ENCODE measurements at regions of chr11 and their contacts with region 1.

Region 1: GRCh38 chr11:46537537-46538295 is 56.1 kb downstream of the AMBRA1 start:
- DNase-seq: peak in 1 of 2 donors; percentile 56
- ATAC-seq: no peak
- H3K4me3 ChIP-seq: no peak overlapping the region
- H3K27ac ChIP-seq: no peak overlapping the region
- H3K4me1 ChIP-seq: no peaks in the 10 kb centered on the region
- H3K27me3 ChIP-seq: no peaks in the 10 kb centered on the region

Region 2: GRCh38 chr11:46149342-46149741 is 388.4 kb before region 1 on chr11:
- intact Hi-C with region 1: loop called in 1 of 2 experiments (anchors 5 kb)
- DNase-seq: no peak
- ATAC-seq: no peak
- H3K4me3 ChIP-seq: no peak overlapping the region
- H3K27ac ChIP-seq: no peak overlapping the region
- H3K4me1 ChIP-seq: no peaks in the 10 kb centered on the region
- H3K27me3 ChIP-seq: no peaks in the 10 kb centered on the region

Region 3: DNA sequence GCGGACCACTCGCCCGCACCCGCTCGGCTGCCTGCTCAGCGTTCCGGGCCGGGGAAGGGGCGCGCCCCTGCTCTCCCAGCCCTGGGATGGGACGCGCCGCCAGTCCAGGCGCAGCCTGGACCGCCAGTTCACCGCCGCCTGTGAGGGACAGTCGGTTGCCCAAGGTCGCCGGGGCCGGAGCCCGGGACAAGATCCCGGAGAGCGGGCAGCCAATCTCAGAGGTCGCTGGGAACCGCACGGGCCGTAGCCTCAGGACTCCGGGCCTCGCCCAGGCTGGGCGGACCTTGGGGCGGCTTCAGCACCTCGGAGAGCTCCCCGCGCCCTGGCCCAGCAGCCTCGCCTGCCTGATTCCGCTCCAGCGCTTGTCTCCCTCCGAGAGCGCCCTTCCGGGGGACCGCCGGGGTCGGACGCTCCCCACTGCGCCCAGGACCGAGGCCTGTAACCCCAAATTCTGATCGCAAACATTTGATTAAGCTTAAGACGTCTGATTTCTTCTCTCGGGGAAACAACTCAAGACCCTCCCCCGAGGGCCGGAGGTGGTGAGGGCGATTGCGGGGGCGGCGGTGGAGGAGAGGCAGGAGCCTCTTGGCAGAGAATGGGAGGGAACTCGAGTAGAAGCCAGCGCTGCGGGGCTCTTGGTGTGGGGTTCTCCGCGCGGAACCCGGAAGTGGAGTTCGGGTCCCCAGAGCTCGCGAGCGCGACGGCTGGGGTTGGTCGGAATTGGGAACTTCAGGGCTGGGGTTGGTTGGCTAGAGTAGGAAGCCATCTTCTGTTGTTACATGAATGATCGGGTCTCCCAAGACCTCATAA is 145.1 kb before region 1 on chr11:
- intact Hi-C with region 1: loop called (anchors 2 to 5 kb)
- DNase-seq: peak; percentile 90 to 95
- ATAC-seq: peak; percentile 92
- H3K4me3 ChIP-seq: no peak overlapping the region
- H3K27ac ChIP-seq: no peak overlapping the region
- H3K4me1 ChIP-seq: no peaks in the 10 kb centered on the region
- H3K27me3 ChIP-seq: no peaks in the 10 kb centered on the region

Region 4: GRCh38 chr11:46616998-46617675 is 79.4 kb after region 1 on chr11 and contains the starts of genes ATG13 and HARBI1:
- intact Hi-C with region 1: loop called in 1 of 2 experiments (anchors 10 kb)
- DNase-seq: peak; percentile 92 to 96
- ATAC-seq: peak; percentile 99
- H3K4me3 ChIP-seq: peak within 1 kb of the TSS; percentile 95 to 100
- H3K27ac ChIP-seq: peak within 1 kb of the TSS; percentile 80 to 96
- H3K4me1 ChIP-seq: peaks cover 0 to 2% of the 10 kb centered on the region in 2 donors
- H3K27me3 ChIP-seq: no peaks in the 10 kb centered on the region
- total RNA-seq, gene ATG13: 59.6 to 72.7 TPM
- total RNA-seq, gene HARBI1: 2.3 to 3.0 TPM